GM12878 (cell line): ENCODE measurements at regions of chr2 and their contacts with region 1.

Region 1: GRCh38 chr2:42086500-42086953 is 38.7 kb downstream of the PKDCC start:
- DNase-seq: no peak
- ATAC-seq: peak; percentile 73
- H3K4me3 ChIP-seq: no peak overlapping the region
- H3K27ac ChIP-seq: no peak overlapping the region
- H3K4me1 ChIP-seq: no peaks in the 10 kb centered on the region
- H3K27me3 ChIP-seq: 0 out of 4 replicates have a peak, but pooled peaks cover 0 to 3% of the 10 kb centered on the region in 2 experiments
- CTCF ChIP-seq: peak; percentile 61 to 83 (median 73); a peak in 4 of 6 replicates
- EP300 ChIP-seq: no peak
- POLR2A ChIP-seq: no peak
- RAD21 ChIP-seq: peak; percentile 96

Region 2: GRCh38 chr2:41791523-41791922 is 295.0 kb before region 1 on chr2:
- CTCF ChIA-PET with region 1: no interaction called
- POLR2A ChIA-PET with region 1: no interaction called
- RAD21 ChIA-PET with region 1: no interaction called
- SMC1A ChIA-PET with region 1: no interaction called
- in situ Hi-C with region 1: no loop called
- intact Hi-C with region 1: no loop called
- DNase-seq: no peak
- ATAC-seq: peak; percentile 57; the same call in 2 of the 3 replicates
- H3K4me3 ChIP-seq: no peak overlapping the region
- H3K27ac ChIP-seq: no peak overlapping the region
- H3K4me1 ChIP-seq: no peaks in the 10 kb centered on the region
- H3K27me3 ChIP-seq: no peaks in the 10 kb centered on the region
- CTCF ChIP-seq: no peak
- EP300 ChIP-seq: no peak
- POLR2A ChIP-seq: no peak
- RAD21 ChIP-seq: no peak

Region 3: DNA sequence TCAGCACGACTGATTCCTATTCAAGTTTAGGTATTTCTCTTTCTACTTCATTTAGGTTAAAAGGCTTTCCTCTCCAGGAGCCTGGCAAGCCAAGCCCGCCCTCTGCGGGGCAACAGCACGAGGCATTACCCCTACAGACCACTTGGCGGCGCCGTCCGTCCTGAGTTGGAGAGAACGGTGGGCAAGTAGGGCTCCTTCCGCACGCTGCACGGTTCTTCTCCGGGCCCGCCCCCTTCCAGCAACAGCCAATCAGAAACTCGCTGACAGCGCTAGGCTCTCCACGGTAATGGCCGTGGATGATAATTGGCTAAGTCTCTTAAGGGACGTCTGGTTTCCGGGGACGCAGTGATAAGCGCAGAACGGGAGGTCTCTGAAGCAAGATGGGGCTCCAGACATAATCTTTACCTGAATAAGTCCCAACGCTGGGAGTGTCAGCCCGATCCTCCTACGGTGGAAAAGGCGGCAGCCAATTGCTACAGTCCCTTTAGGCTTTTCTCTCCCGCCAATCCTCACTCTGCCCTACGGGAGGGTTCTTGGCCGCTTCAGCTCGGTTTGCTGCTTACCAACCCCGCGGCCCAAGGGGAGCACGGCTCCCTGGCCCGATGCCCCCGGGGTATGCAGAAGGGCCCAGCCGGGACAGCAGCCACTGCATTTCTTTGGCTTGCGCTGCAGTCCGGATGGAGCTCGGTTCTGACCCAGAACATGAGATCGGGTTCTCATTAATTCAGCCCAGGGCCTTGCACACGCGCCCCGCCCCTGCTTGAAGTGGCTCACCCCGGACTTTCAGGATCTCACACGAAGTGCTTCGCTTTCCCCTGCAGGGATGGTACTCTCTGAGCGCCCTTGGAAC is 245.6 kb before region 1 on chr2:
- CTCF ChIA-PET with region 1: interaction called, 19 read pairs
- POLR2A ChIA-PET with region 1: no interaction called
- RAD21 ChIA-PET with region 1: interaction called, 10 read pairs
- SMC1A ChIA-PET with region 1: interaction called, 19 read pairs
- in situ Hi-C with region 1: no loop called
- intact Hi-C with region 1: loop called (anchors 1 kb)
- DNase-seq: peak; percentile 88
- ATAC-seq: peak; percentile 100
- H3K4me3 ChIP-seq: peak overlapping the region; percentile 75
- H3K27ac ChIP-seq: peak overlapping the region; percentile 53; the same call in 1 of the 2 replicates
- H3K4me1 ChIP-seq: no peaks in the 10 kb centered on the region
- H3K27me3 ChIP-seq: peaks cover 1 to 2% of the 10 kb centered on the region in 2 experiments; a peak in 2 of 4 replicates
- CTCF ChIP-seq: peak; percentile 97 to 99 (median 99)
- EP300 ChIP-seq: no peak
- POLR2A ChIP-seq: peak; percentile 73
- RAD21 ChIP-seq: peak; percentile 83

Region 4: GRCh38 chr2:41853427-41854216 is 232.9 kb before region 1 on chr2:
- CTCF ChIA-PET with region 1: interaction called, 110 read pairs
- POLR2A ChIA-PET with region 1: no interaction called
- RAD21 ChIA-PET with region 1: interaction called, 13 read pairs
- SMC1A ChIA-PET with region 1: interaction called, 18 read pairs
- in situ Hi-C with region 1: no loop called
- intact Hi-C with region 1: loop called (anchors 1 kb)
- DNase-seq: no peak
- ATAC-seq: peak; percentile 47
- H3K4me3 ChIP-seq: no peak overlapping the region
- H3K27ac ChIP-seq: no peak overlapping the region
- H3K4me1 ChIP-seq: no peaks in the 10 kb centered on the region
- H3K27me3 ChIP-seq: no peaks in the 10 kb centered on the region; a peak in 1 of 4 replicates
- CTCF ChIP-seq: peak; percentile 49 to 58 (median 57); a peak in 5 of 6 replicates
- EP300 ChIP-seq: no peak
- POLR2A ChIP-seq: no peak
- RAD21 ChIP-seq: peak; percentile 78

Region 5: DNA sequence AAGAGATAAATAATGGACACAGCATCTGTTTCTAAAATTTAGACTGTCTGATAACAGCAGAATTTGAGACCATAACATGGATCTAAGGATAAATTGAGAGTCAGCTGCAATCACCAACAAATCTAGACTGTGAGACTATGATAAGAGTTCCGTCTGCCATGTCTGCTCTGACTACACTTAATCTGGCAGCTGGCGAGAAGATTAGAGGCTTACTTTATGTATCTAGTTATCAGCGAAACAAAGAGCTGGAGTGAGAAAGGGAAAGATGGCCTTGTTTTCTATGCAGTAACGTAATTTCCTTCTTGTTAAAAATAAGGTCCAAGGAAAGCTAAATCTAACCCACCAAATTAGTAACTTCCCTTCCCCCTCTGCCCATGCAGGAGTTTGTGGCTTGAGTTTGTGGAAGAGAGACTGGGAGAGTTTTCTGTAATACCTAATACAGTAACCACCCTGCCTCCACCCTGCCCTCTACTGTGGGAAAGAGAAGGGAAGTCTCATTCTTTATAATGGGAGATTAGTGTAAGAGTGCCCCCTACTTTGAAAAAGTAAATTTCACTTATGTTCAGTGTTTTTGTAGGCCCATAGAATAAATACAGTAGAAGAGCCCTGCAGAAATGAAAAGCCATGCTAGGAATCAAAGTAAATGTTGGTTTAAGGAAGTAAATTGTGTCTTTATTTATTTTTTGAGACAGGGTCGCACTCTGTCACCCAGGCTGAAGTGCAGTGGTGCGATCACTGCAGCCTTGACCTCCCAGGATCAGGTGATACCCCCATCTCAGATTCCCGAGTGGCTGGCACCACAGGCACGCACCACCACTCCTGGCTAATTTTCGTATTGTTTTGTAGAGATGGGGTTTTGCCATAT is 110.1 kb after region 1 on chr2:
- CTCF ChIA-PET with region 1: interaction called, 22 read pairs
- POLR2A ChIA-PET with region 1: no interaction called
- RAD21 ChIA-PET with region 1: interaction called, 3 read pairs
- SMC1A ChIA-PET with region 1: interaction called, 3 read pairs
- in situ Hi-C with region 1: no loop called
- intact Hi-C with region 1: no loop called
- DNase-seq: peak; percentile 11
- ATAC-seq: peak; percentile 78
- H3K4me3 ChIP-seq: no peak overlapping the region
- H3K27ac ChIP-seq: no peak overlapping the region
- H3K4me1 ChIP-seq: peaks cover 19% of the 10 kb centered on the region; the same call in 1 of the 2 replicates
- H3K27me3 ChIP-seq: no peaks in the 10 kb centered on the region
- CTCF ChIP-seq: peak; percentile 48 to 76 (median 52); a peak in 5 of 6 replicates
- EP300 ChIP-seq: no peak
- POLR2A ChIP-seq: no peak
- RAD21 ChIP-seq: peak; percentile 68

Region 6: DNA sequence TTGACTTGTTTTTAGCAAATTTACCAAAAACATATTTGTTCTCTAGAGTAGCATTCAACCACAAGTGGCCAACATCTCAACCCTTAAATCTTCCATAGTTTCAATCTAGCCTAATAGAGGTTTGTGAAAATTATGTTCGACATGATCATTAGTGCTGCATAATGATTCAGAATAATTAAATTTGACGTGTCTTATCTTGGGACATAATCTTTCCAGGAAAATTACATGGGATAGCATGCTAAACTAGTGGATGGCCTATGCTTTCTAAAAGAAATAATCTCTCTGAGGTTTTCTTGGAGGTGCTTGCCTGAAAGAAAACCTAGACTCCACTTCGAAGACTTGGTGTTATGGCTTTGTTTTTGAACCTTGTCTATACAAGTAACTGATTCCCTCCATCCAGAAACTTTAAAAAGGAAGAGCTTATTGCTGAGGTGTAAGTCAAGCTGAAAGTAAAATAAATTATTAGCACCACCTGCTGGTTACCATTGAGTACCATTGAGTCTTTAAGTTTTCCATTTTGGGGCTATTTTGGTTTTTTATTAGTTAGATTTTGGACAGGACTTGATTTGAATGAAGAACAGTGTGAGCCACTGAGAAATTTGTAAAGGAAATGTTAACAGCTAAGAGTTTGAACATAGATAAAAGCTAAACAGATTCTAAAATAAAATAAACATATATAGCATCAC is 241.8 kb after region 1 on chr2:
- CTCF ChIA-PET with region 1: interaction called, 28 read pairs
- POLR2A ChIA-PET with region 1: interaction called, 4 read pairs
- RAD21 ChIA-PET with region 1: interaction called, 12 read pairs
- SMC1A ChIA-PET with region 1: interaction called, 19 read pairs
- in situ Hi-C with region 1: no loop called
- intact Hi-C with region 1: no loop called
- DNase-seq: no peak
- ATAC-seq: peak; percentile 73
- H3K4me3 ChIP-seq: no peak overlapping the region
- H3K27ac ChIP-seq: no peak overlapping the region
- H3K4me1 ChIP-seq: no peaks in the 10 kb centered on the region
- H3K27me3 ChIP-seq: no peaks in the 10 kb centered on the region
- CTCF ChIP-seq: peak; percentile 26 to 47 (median 29); a peak in 3 of 6 replicates
- EP300 ChIP-seq: no peak
- POLR2A ChIP-seq: no peak
- RAD21 ChIP-seq: peak; percentile 58